ENCODE measurements at regions of chr7 and their contacts with region 1.

Region 1: GRCh38 chr7:7851381-7851780 is 117.2 kb upstream of the GLCCI1 start:
- DNase-seq: no peak
- ATAC-seq: no peak
- H3K4me3 ChIP-seq: no peak overlapping the region
- H3K27ac ChIP-seq: no peak overlapping the region
- H3K4me1 ChIP-seq: 0 out of 2 replicates have a peak, but pooled peaks cover 5% of the 10 kb centered on the region
- H3K27me3 ChIP-seq: no peaks in the 10 kb centered on the region
- CTCF ChIP-seq: no peak

Region 2: GRCh38 chr7:7505915-7506314 is 345.5 kb before region 1 on chr7:
- CTCF ChIA-PET with region 1: no interaction called
- POLR2A ChIA-PET with region 1: no interaction called
- intact Hi-C with region 1: no loop called
- DNase-seq: no peak
- ATAC-seq: no peak; the same call in 1 of the 2 replicates
- H3K4me3 ChIP-seq: no peak overlapping the region
- H3K27ac ChIP-seq: no peak overlapping the region
- H3K4me1 ChIP-seq: peaks cover 12% of the 10 kb centered on the region
- H3K27me3 ChIP-seq: no peaks in the 10 kb centered on the region
- CTCF ChIP-seq: no peak

Region 3: GRCh38 chr7:7884855-7885254 is 33.5 kb after region 1 on chr7:
- CTCF ChIA-PET with region 1: no interaction called
- POLR2A ChIA-PET with region 1: no interaction called
- intact Hi-C with region 1: loop called (anchors 1 kb)
- DNase-seq: peak; percentile 55
- ATAC-seq: peak; percentile 98
- H3K4me3 ChIP-seq: no peak overlapping the region
- H3K27ac ChIP-seq: no peak overlapping the region
- H3K4me1 ChIP-seq: peaks cover 12% of the 10 kb centered on the region
- H3K27me3 ChIP-seq: no peaks in the 10 kb centered on the region
- CTCF ChIP-seq: no peak